PC-9 (cell line): ENCODE measurements at regions of chr2 and their contacts with region 1.

Region 1: GRCh38 chr2:19786408-19787058 is 115.2 kb downstream of the TTC32 start:
- DNase-seq: peak; percentile 65 to 94
- H3K4me3 ChIP-seq: 0 out of 2 replicates have a peak overlapping the region, but pooled peaks have one; percentile 2
- H3K27ac ChIP-seq: peak overlapping the region; percentile 100
- H3K4me1 ChIP-seq: peaks cover 55% of the 10 kb centered on the region
- H3K27me3 ChIP-seq: no peaks in the 10 kb centered on the region
- CTCF ChIP-seq: no peak

Region 2: GRCh38 chr2:19819097-19820065 is 32.8 kb after region 1 on chr2:
- CTCF ChIA-PET with region 1: no interaction called
- POLR2A ChIA-PET with region 1: no interaction called
- intact Hi-C with region 1: loop called (anchors 1 kb)
- DNase-seq: peak; percentile 74 to 96
- H3K4me3 ChIP-seq: no peak overlapping the region
- H3K27ac ChIP-seq: peak overlapping the region; percentile 63
- H3K4me1 ChIP-seq: peaks cover 24% of the 10 kb centered on the region
- H3K27me3 ChIP-seq: no peaks in the 10 kb centered on the region
- CTCF ChIP-seq: no peak